Activated T-helper 1 cell treated with anti-CD3 and anti-CD28 coated beads, Interleukin-12 subunit alpha, Interleukin-12 subunit beta, Interleukin-2, Interleukin-4 antibody, amounts not matched to agents 30 ng/mL and 10 ng/mL and 1 ng/mL, durations not matched to agents 14 hours and 24 hours and 36 hours (primary cell): ENCODE measurements at regions of chr21 and their contacts with region 1.

Region 1: GRCh38 chr21:34693192-34693810 is 24.5 kb downstream of the CLIC6 start:
- DNase-seq: peak; percentile 22
- H3K4me3 Mint-ChIP-seq: no peak overlapping the region
- H3K27ac Mint-ChIP-seq: no peak overlapping the region
- H3K4me1 Mint-ChIP-seq: peaks cover 12% of the 10 kb centered on the region
- H3K27me3 Mint-ChIP-seq: peaks cover 35% of the 10 kb centered on the region

Region 2: GRCh38 chr21:34661848-34662247 is 31.5 kb before region 1 on chr21:
- intact Hi-C with region 1: no loop called
- DNase-seq: no peak
- H3K4me3 Mint-ChIP-seq: no peak overlapping the region
- H3K27ac Mint-ChIP-seq: no peak overlapping the region
- H3K4me1 Mint-ChIP-seq: no peaks in the 10 kb centered on the region
- H3K27me3 Mint-ChIP-seq: peaks cover 26% of the 10 kb centered on the region

Region 3: DNA sequence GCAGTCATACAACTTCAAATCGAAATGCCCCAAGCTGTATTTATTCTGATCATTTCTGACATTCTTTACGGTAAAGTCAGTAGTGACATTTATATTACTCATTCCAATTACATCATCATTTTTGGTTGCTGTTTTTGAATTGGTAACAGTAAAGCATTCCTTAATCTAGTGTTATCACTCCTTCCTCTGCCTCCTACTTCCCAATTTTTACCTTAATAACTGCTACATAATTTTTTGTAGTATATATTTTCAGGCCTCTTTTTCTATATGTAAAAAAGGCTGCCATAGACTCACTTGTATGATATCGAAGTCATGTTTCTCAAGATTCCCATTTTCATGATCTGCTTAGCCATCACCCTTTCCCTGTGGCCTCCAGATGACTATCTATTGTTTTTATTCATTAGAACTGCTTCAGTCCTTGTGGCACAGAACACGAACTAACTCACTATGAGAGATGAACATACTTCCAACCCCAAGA is 188.6 kb after region 1 on chr21:
- intact Hi-C with region 1: loop called (anchors 5 kb)
- DNase-seq: no peak
- H3K4me3 Mint-ChIP-seq: peak overlapping the region; percentile 67
- H3K27ac Mint-ChIP-seq: peak overlapping the region; percentile 36
- H3K4me1 Mint-ChIP-seq: peaks cover 74% of the 10 kb centered on the region
- H3K27me3 Mint-ChIP-seq: no peaks in the 10 kb centered on the region

Region 4: DNA sequence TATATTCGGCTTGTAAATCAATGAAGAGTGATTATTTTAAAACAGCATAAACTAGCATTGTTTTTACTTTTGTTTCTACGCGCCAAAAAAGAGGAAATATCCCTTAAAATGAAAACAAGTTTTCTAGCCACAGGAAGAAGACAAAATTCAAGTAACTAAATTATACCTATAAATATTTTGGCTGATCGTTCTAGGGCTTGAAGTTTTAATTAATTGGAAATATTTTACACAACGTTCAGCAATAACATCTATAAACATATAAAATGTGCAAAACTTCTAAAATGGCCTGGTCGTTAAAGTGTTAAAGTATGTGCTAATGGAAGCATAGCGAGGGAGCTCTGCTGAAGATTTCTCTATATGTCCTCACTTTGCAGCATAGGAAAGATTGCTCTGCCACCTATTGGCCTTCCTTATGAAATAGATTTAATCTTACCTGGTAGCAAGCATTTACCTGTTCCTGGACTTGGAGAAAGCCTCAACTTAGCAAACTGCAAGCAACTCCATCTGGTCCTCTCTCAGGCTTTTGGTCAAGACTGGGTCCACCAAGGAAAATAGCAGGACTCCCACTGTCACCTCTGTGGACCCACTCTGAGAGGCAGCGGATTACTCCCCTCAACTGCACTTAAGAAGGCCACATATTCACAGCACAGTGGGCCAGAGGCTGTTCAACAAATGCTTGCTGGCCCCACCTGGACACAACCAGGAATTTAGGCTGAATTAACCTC is 707.1 kb after region 1 on chr21:
- intact Hi-C with region 1: loop called (anchors 1 kb)
- DNase-seq: peak; percentile 9
- H3K4me3 Mint-ChIP-seq: no peak overlapping the region
- H3K27ac Mint-ChIP-seq: no peak overlapping the region
- H3K4me1 Mint-ChIP-seq: peaks cover 23% of the 10 kb centered on the region
- H3K27me3 Mint-ChIP-seq: no peaks in the 10 kb centered on the region

Region 5: GRCh38 chr21:35840197-35840799 is 1147.0 kb after region 1 on chr21:
- intact Hi-C with region 1: loop called (anchors 1 kb)
- DNase-seq: peak; percentile 28
- H3K4me3 Mint-ChIP-seq: no peak overlapping the region
- H3K27ac Mint-ChIP-seq: no peak overlapping the region
- H3K4me1 Mint-ChIP-seq: no peaks in the 10 kb centered on the region
- H3K27me3 Mint-ChIP-seq: peaks cover 7% of the 10 kb centered on the region

Region 6: GRCh38 chr21:36028127-36029069 is 1335.1 kb after region 1 on chr21:
- intact Hi-C with region 1: loop called (anchors 2 kb)
- DNase-seq: peak; percentile 57
- H3K4me3 Mint-ChIP-seq: no peak overlapping the region
- H3K27ac Mint-ChIP-seq: no peak overlapping the region
- H3K4me1 Mint-ChIP-seq: peaks cover 6% of the 10 kb centered on the region
- H3K27me3 Mint-ChIP-seq: peaks cover 2% of the 10 kb centered on the region